Activated CD4-positive, alpha-beta T cell treated with anti-CD3 and anti-CD28 coated beads for 36 hours (primary cell): ENCODE measurements at regions of chr17 and their contacts with region 1.

Region 1: DNA sequence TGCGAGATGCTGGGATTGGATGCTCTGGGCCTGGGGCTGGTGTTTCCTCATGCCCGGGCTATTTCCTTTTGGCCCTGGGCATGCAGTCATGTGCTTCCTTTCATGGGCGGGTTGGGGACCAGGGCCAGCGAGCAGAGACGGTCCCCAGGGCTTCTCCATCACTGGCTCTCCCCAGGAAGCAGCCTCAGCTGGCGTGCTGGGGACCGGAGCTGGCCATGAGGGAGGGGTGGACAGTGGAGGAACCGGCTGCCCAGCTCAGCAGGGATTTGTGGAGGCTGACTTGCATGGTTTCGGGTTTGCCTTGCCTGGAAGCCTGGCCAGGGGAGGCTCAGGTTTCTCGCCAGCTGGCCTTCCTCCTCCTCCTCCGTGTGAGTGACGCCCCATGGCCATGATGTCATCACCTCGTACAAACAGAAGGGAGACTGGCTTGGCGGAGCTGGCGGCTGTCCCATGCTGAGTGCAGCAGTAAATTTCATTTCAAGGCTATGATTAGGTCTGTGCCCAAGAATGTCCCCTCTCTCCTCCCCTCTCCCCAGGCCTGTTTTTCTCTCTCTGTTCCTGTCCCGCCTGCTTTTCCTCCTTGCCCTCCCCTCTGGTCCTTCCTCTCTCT is 8.9 kb upstream of the TIMP2 start:
- DNase-seq: no peak
- ATAC-seq: no peak
- H3K4me3 Mint-ChIP-seq: no peak overlapping the region
- H3K27ac Mint-ChIP-seq: no peak overlapping the region
- H3K4me1 Mint-ChIP-seq: peaks cover 8% of the 10 kb centered on the region
- H3K27me3 Mint-ChIP-seq: no peaks in the 10 kb centered on the region

Region 2: DNA sequence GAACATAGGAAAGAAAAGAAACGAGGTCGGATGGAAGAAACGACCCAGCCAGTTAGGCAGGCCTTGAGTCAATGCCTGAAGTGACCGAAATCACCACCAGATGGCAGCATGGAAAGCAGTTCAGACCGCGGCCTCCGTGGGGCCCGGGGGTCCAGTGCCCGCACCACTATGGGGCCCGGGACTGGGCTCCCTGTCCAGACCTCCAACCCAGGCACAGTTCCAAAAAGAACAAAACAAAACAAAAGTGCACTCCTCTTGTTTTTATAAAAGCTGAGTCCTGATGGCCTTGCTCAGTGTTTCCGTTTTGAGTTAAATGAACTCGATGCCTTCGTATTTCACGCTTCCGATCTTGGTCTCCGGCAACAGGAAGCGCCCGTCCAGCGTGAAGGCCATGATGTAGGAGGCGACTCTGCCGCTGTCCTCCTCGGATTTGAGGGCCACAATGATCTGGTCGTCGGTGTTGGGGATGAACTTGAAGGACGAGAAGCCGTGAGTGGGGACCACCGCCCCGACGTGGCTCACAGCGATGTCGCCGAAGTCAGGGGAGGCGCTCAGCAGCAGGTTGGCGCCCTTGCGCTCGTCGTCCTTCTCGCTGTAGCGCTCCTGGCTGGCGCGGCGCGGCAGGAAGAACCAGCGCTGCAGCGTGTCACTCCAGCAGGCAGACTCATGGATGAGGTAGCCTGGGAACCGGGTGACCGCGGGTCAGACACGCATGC is 59.3 kb after region 1 on chr17:
- CTCF ChIA-PET with region 1: no interaction called
- POLR2A ChIA-PET with region 1: no interaction called
- intact Hi-C with region 1: loop called in 1 of 2 experiments (anchors 10 kb)
- DNase-seq: peak; percentile 77
- ATAC-seq: peak; percentile 78
- H3K4me3 Mint-ChIP-seq: no peak overlapping the region
- H3K27ac Mint-ChIP-seq: no peak overlapping the region
- H3K4me1 Mint-ChIP-seq: peaks cover 6% of the 10 kb centered on the region
- H3K27me3 Mint-ChIP-seq: no peaks in the 10 kb centered on the region